Activated CD4-positive, alpha-beta memory T cell treated with anti-CD3 and anti-CD28 coated beads for 36 hours (primary cell): ENCODE measurements at regions of chr4 and their contacts with region 1.

Region 1: GRCh38 chr4:155442267-155443105 is 65.7 kb upstream of the MAP9 start:
- DNase-seq: peak; percentile 65
- H3K4me3 Mint-ChIP-seq: no peak overlapping the region
- H3K27ac Mint-ChIP-seq: no peak overlapping the region
- H3K4me1 Mint-ChIP-seq: peaks cover 2% of the 10 kb centered on the region
- H3K27me3 Mint-ChIP-seq: peaks cover 13% of the 10 kb centered on the region

Region 2: DNA sequence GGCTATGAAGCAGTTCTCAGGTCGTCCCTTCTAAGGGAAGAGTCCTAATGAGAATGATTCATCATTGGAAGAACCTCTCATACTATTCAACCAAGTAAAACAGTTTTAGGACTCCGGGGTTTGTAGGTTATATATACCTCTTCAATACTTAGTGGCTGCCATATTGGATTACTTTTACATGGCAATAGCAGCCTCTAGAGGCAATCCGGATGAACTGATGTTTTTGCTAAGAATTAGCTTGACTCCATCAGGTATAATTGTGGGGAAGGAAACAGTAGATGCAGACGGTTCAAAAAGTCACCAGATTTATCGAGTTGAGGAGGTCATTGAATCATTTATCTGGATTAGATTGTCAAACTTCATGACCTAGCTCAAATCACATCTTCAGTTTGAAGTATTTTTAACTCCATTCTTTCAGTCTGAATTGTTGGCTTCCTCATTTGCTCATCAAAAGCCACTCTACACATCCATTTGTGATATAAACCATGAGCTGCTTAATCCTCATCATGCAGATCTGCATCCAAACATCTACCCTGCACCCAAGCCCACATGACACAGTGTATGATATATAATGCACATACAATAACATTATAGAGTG is 344.7 kb after region 1 on chr4:
- CTCF ChIA-PET with region 1: interaction called, 12 read pairs
- POLR2A ChIA-PET with region 1: no interaction called
- intact Hi-C with region 1: loop called (anchors 1 kb)
- DNase-seq: no peak
- H3K4me3 Mint-ChIP-seq: no peak overlapping the region
- H3K27ac Mint-ChIP-seq: no peak overlapping the region
- H3K4me1 Mint-ChIP-seq: peaks cover 4% of the 10 kb centered on the region
- H3K27me3 Mint-ChIP-seq: no peaks in the 10 kb centered on the region